Naive thymus-derived CD4-positive, alpha-beta T cell (primary cell): ENCODE measurements at regions of chr14 and their contacts with region 1.

Region 1: DNA sequence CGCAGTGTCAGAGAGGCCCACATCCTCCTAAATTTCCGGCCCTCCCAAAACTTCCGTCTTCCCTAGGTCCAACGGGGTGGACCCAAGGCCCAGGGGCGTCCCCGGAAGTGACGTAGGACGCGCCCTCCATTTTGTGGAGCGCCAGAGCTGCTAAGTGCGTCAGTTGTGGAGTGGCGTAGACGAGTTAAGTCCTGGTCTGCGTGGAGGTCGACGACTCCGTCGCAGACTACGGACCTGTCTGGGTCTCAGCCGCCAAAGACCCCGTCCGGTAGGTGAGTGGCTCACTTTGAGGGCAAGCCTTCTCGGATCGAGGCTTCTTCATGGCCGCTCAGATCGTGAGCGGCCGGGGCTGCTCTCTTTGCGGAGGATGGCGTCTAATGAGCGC is at the start of gene SRSF5:
- DNase-seq: peak; percentile 88 to 95 (median 93)
- ATAC-seq: peak; percentile 90
- H3K4me3 ChIP-seq: peak within 1 kb of the TSS; percentile 100
- H3K4me3 Mint-ChIP-seq: peak within 1 kb of the TSS; percentile 94 to 100 (median 99)
- H3K27ac ChIP-seq: peak within 1 kb of the TSS; percentile 100
- H3K27ac Mint-ChIP-seq: peak within 1 kb of the TSS; percentile 100
- H3K4me1 ChIP-seq: peaks cover 33 to 50% of the 10 kb centered on the region in 2 donors
- H3K4me1 Mint-ChIP-seq: peaks cover 49 to 86% (median 78%) of the 10 kb centered on the region in 7 donors
- H3K27me3 ChIP-seq: no peaks in the 10 kb centered on the region
- H3K27me3 Mint-ChIP-seq: peaks cover 0 to 4% (median 0%) of the 10 kb centered on the region in 5 donors
- total RNA-seq, gene SRSF5: 355 to 1,361 (median 1,191) TPM

Region 2: DNA sequence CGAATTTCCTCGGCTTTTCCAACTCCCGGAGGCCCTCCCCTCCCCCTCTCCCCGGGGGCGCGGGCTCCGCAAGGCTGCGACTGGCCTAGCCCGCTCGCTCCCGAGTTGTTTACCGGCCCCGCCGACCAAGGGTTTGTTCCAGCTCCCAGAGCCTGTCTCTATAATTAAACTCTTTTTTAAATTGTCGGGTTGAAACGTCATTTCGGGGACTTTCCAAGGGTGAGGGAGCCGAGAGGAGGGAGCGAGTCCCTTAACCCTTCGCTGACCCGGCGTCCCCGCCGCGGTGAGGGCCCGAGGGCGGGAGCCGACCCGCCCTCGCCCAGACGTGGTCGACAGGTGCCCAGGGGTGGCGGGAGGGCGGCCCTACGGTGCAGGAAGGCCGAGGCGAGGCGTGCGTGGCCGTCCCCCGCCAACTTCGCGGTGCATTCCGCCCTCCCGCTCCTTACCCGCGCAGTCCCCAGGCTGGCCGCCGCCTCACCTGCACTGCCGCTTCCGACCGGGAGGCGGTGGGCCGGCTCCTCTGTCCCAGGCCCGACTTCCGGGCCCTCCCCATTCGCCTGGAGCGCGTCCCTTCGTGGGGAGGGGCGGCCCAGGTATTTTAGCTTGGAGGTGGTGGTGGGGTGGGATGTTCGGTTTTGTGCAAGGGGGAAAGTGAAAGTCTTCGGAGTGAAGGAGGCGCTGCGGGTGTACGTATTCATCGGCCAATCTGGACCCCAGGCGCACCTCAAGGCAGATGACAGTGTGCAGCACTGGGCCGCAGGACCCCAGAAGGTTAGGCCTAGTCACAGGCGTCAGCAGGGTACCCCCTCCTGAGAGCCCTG is 971.2 kb before region 1 on chr14:
- CTCF ChIA-PET with region 1: no interaction called
- POLR2A ChIA-PET with region 1: no interaction called
- intact Hi-C with region 1: loop called (anchors 5 kb)
- DNase-seq: peak; percentile 77 to 92 (median 86)
- ATAC-seq: peak; percentile 56
- H3K4me3 ChIP-seq: peak overlapping the region; percentile 91
- H3K4me3 Mint-ChIP-seq: peak overlapping the region; percentile 92 to 99 (median 95)
- H3K27ac ChIP-seq: peak overlapping the region; percentile 100
- H3K27ac Mint-ChIP-seq: peak overlapping the region; percentile 91 to 100 (median 98)
- H3K4me1 ChIP-seq: peaks cover 11 to 18% of the 10 kb centered on the region in 2 donors
- H3K4me1 Mint-ChIP-seq: peaks cover 9 to 37% (median 31%) of the 10 kb centered on the region in 7 donors
- H3K27me3 ChIP-seq: no peaks in the 10 kb centered on the region
- H3K27me3 Mint-ChIP-seq: peaks cover 0 to 4% (median 0%) of the 10 kb centered on the region in 5 donors

Region 3: DNA sequence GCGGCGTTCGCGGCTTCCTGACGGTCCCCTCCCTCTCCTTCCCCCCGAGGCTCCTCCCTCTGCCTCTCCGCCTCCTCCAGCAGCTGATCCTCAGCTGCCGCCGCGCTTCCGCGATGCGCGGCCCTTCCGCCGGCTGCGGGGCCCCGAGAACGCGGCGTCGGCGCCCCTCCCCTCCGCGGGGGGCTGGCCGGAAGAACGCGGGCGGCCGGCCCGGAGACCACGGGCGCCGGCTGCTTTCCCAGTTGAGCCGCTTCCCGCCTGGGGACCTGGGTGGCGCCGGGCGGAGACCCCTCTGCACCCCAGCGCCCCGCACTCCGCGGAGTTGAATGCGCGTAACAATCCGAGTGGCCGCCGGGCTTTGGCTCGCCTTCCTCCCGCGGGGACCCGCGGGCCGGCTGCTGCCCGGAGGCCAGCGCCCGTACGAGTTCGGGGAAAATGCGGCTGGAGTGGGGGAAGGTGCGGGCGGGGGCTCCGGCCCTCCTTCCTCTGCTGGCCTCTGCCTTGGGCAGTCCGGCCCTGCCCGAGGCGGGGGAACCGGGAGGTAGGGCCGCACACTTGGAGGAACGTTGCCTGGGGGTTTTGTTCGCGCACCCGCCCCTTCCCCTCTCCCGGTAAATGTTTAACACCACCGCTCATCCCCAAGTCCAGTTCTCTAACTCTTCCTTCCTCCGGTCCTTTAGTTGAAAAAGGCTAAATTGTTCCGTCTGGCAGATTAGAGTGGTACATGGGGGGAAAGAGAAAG is 613.7 kb before region 1 on chr14:
- CTCF ChIA-PET with region 1: no interaction called
- POLR2A ChIA-PET with region 1: interaction called, 3 read pairs
- intact Hi-C with region 1: loop called (anchors 2 to 5 kb)
- DNase-seq: peak; percentile 76 to 96 (median 91)
- ATAC-seq: peak; percentile 94
- H3K4me3 ChIP-seq: peak overlapping the region; percentile 83
- H3K4me3 Mint-ChIP-seq: peak overlapping the region; percentile 89 to 100 (median 97)
- H3K27ac ChIP-seq: peak overlapping the region; percentile 90
- H3K27ac Mint-ChIP-seq: peak overlapping the region; percentile 84 to 98 (median 93)
- H3K4me1 ChIP-seq: peaks cover 11 to 12% of the 10 kb centered on the region in 2 donors
- H3K4me1 Mint-ChIP-seq: peaks cover 30 to 37% (median 36%) of the 10 kb centered on the region in 7 donors
- H3K27me3 ChIP-seq: no peaks in the 10 kb centered on the region
- H3K27me3 Mint-ChIP-seq: peaks cover 0 to 36% (median 0%) of the 10 kb centered on the region in 5 donors

Region 4: DNA sequence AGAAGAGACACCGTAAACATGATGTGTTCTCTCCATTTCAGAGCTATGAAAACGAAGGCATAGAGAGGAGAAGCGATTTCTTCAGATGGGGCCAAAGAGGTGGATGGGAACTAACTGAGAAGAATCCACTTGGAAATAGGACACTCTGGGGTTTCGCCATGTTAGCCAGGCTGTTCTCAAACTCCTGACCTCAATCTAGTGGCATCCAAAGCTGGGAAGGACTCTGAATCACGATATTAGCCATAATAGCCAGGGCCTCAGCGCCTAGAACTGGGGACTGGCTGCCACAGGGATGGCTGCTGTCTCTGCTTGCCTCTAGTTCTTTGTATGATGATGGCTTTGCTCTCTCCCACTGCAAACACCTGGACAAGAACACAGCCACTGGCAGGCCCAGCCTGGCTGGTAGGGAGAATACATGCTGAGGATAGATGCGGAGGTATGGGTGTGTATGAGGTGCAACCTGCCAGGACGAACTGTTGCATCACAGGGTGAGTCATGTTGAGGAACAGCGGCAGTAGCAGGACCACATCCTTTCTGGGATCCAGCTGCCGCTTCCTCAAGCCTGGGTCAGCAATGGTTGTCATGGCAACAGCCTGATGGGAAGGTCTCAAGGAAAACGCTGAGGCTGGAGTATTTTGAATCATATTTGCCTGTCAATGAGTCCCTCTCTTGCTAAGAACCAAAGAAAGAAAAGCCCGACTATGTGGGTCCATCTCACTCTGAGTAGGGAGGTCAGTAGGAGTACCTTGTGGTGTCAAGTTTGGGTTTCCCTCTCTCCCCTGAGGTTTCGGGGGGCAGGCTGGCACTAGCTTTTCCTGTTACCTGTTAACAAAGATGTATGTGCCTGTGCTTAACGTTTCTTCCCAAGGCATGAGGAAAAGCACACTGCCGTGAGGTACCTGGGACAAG is 223.4 kb before region 1 on chr14:
- CTCF ChIA-PET with region 1: no interaction called
- POLR2A ChIA-PET with region 1: no interaction called
- intact Hi-C with region 1: no loop called
- DNase-seq: peak in 1 of 9 donors; percentile 27
- ATAC-seq: peak; percentile 70
- H3K4me3 ChIP-seq: no peak overlapping the region
- H3K4me3 Mint-ChIP-seq: peak overlapping the region in 2 of 10 donors; percentile 13 to 25
- H3K27ac ChIP-seq: no peak overlapping the region
- H3K27ac Mint-ChIP-seq: peak overlapping the region in 1 of 9 donors; percentile 47
- H3K4me1 ChIP-seq: no peaks in the 10 kb centered on the region
- H3K4me1 Mint-ChIP-seq: peaks cover 0 to 17% (median 4%) of the 10 kb centered on the region in 7 donors
- H3K27me3 ChIP-seq: peaks cover 0 to 2% of the 10 kb centered on the region in 2 donors
- H3K27me3 Mint-ChIP-seq: peaks cover 20 to 48% (median 35%) of the 10 kb centered on the region in 5 donors

Region 5: GRCh38 chr14:69685716-69686115 is 81.3 kb before region 1 on chr14:
- CTCF ChIA-PET with region 1: no interaction called
- POLR2A ChIA-PET with region 1: no interaction called
- intact Hi-C with region 1: loop called in 1 of 2 experiments (anchors 10 kb)
- DNase-seq: peak in 1 of 9 donors; percentile 38
- ATAC-seq: peak; percentile 34
- H3K4me3 ChIP-seq: no peak overlapping the region
- H3K4me3 Mint-ChIP-seq: peak overlapping the region in 3 of 10 donors; percentile 1 to 78 (median 39)
- H3K27ac ChIP-seq: no peak overlapping the region
- H3K27ac Mint-ChIP-seq: peak overlapping the region in 5 of 9 donors; percentile 14 to 82 (median 57)
- H3K4me1 ChIP-seq: peaks cover 27 to 28% of the 10 kb centered on the region in 2 donors
- H3K4me1 Mint-ChIP-seq: peaks cover 71 to 83% (median 81%) of the 10 kb centered on the region in 7 donors
- H3K27me3 ChIP-seq: no peaks in the 10 kb centered on the region
- H3K27me3 Mint-ChIP-seq: no peaks in the 10 kb centered on the region

Region 6: DNA sequence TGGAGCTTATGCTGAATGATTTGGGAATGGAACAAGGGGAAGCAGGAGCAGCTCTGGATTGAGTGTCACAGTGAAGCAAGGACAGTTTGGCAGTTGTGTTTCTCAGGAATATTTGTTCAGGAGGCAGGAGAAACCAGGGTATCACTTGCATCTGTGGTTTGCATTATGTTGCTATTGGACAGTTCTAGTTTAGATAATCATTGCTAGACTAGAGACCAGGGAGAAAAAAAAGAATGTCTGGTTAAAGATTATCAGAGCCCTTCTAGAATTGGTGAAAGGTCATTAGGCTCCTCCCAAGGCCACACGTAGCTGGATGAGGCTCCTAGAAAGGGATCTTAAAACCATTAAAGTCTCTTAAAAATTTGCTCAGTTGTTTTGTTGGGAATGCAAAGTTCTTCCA is 17.0 kb before region 1 on chr14:
- CTCF ChIA-PET with region 1: interaction called, 7 read pairs
- POLR2A ChIA-PET with region 1: interaction called, 46 read pairs
- intact Hi-C with region 1: no loop called
- DNase-seq: no peak
- ATAC-seq: no peak
- H3K4me3 ChIP-seq: no peak overlapping the region
- H3K4me3 Mint-ChIP-seq: no peak overlapping the region
- H3K27ac ChIP-seq: no peak overlapping the region
- H3K27ac Mint-ChIP-seq: no peak overlapping the region
- H3K4me1 ChIP-seq: no peaks in the 10 kb centered on the region
- H3K4me1 Mint-ChIP-seq: peaks cover 7 to 18% (median 11%) of the 10 kb centered on the region in 7 donors
- H3K27me3 ChIP-seq: no peaks in the 10 kb centered on the region
- H3K27me3 Mint-ChIP-seq: peaks cover 0 to 3% (median 0%) of the 10 kb centered on the region in 5 donors

Region 7: GRCh38 chr14:69794791-69795190 is 27.8 kb after region 1 on chr14:
- CTCF ChIA-PET with region 1: no interaction called
- POLR2A ChIA-PET with region 1: no interaction called
- intact Hi-C with region 1: no loop called
- DNase-seq: no peak
- ATAC-seq: no peak
- H3K4me3 ChIP-seq: no peak overlapping the region
- H3K4me3 Mint-ChIP-seq: no peak overlapping the region
- H3K27ac ChIP-seq: no peak overlapping the region
- H3K27ac Mint-ChIP-seq: no peak overlapping the region
- H3K4me1 ChIP-seq: no peaks in the 10 kb centered on the region
- H3K4me1 Mint-ChIP-seq: no peaks in the 10 kb centered on the region
- H3K27me3 ChIP-seq: no peaks in the 10 kb centered on the region
- H3K27me3 Mint-ChIP-seq: peaks cover 0 to 6% (median 2%) of the 10 kb centered on the region in 5 donors

Region 8: DNA sequence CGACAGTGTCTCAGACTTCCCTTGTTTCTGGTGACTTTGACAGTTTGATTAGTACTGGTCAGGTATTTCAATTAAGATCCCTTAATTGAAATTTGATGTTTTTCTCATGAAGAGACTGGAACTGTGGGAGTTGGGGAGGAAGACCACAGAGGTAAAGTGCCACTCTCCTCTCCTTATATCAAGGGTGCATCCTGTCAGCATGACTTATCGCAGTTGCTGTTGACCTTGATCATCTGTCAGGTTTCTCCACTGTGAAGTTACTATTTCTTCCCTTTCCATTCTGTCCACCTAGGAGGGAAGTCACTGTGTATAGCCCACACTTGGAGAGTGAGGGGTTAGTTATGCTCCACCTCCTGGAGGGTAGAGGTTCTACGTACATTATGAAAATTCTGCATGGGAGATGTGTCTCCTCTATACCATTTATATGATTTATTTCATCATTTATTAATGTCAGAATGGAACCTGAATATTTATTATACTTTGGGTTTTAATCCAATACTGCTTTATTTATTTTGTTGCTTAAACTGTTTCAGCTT is 72.0 kb after region 1 on chr14:
- CTCF ChIA-PET with region 1: no interaction called
- POLR2A ChIA-PET with region 1: no interaction called
- intact Hi-C with region 1: no loop called
- DNase-seq: no peak
- ATAC-seq: no peak
- H3K4me3 ChIP-seq: no peak overlapping the region
- H3K4me3 Mint-ChIP-seq: no peak overlapping the region
- H3K27ac ChIP-seq: no peak overlapping the region
- H3K27ac Mint-ChIP-seq: no peak overlapping the region
- H3K4me1 ChIP-seq: no peaks in the 10 kb centered on the region
- H3K4me1 Mint-ChIP-seq: no peaks in the 10 kb centered on the region
- H3K27me3 ChIP-seq: no peaks in the 10 kb centered on the region
- H3K27me3 Mint-ChIP-seq: peaks cover 0 to 15% (median 8%) of the 10 kb centered on the region in 5 donors

Region 9: GRCh38 chr14:69945912-69946311 is 178.9 kb after region 1 on chr14:
- CTCF ChIA-PET with region 1: no interaction called
- POLR2A ChIA-PET with region 1: no interaction called
- intact Hi-C with region 1: no loop called
- DNase-seq: no peak
- ATAC-seq: no peak
- H3K4me3 ChIP-seq: no peak overlapping the region
- H3K4me3 Mint-ChIP-seq: no peak overlapping the region
- H3K27ac ChIP-seq: no peak overlapping the region
- H3K27ac Mint-ChIP-seq: no peak overlapping the region
- H3K4me1 ChIP-seq: no peaks in the 10 kb centered on the region
- H3K4me1 Mint-ChIP-seq: peaks cover 0 to 5% (median 0%) of the 10 kb centered on the region in 7 donors
- H3K27me3 ChIP-seq: no peaks in the 10 kb centered on the region
- H3K27me3 Mint-ChIP-seq: peaks cover 10 to 66% (median 35%) of the 10 kb centered on the region in 5 donors

Region 10: GRCh38 chr14:70655110-70655826 is 888.3 kb after region 1 on chr14:
- CTCF ChIA-PET with region 1: no interaction called
- POLR2A ChIA-PET with region 1: no interaction called
- intact Hi-C with region 1: loop called in 1 of 2 experiments (anchors 10 kb)
- DNase-seq: peak; percentile 29 to 93 (median 91)
- ATAC-seq: peak; percentile 95
- H3K4me3 ChIP-seq: peak overlapping the region; percentile 43
- H3K4me3 Mint-ChIP-seq: peak overlapping the region; percentile 76 to 89 (median 85)
- H3K27ac ChIP-seq: peak overlapping the region; percentile 84
- H3K27ac Mint-ChIP-seq: peak overlapping the region; percentile 94 to 99 (median 98)
- H3K4me1 ChIP-seq: peaks cover 60 to 83% of the 10 kb centered on the region in 2 donors
- H3K4me1 Mint-ChIP-seq: peaks cover 66 to 98% (median 94%) of the 10 kb centered on the region in 7 donors
- H3K27me3 ChIP-seq: no peaks in the 10 kb centered on the region
- H3K27me3 Mint-ChIP-seq: no peaks in the 10 kb centered on the region